Gastrocnemius medialis (tissue), 4 donors: ENCODE measurements at regions of chr13 and their contacts with region 1.

Region 1: GRCh38 chr13:20703780-20704445 is 414 bp downstream of the IL17D start:
- DNase-seq: peak in 1 of 2 donors; percentile 65
- ATAC-seq: peak; percentile 64 to 79
- H3K4me3 ChIP-seq: peak overlapping the region in 3 of 4 donors; percentile 23 to 71 (median 54)
- H3K27ac ChIP-seq: peak overlapping the region; percentile 22 to 77 (median 58)
- H3K4me1 ChIP-seq: peaks cover 12 to 14% of the 10 kb centered on the region in 2 donors
- H3K27me3 ChIP-seq: no peaks in the 10 kb centered on the region
- CTCF ChIP-seq: peak in 4 of 5 experiments; percentile 63 to 81 (median 78)
- POLR2A ChIP-seq: peak; percentile 44 to 68

Region 2: GRCh38 chr13:20495082-20496023 is 208.6 kb before region 1 on chr13:
- in situ Hi-C with region 1: loop called in 1 of 4 experiments (anchors 10 kb)
- intact Hi-C with region 1: loop called (anchors 5 kb)
- DNase-seq: peak; percentile 31 to 42
- ATAC-seq: peak; percentile 85 to 87
- H3K4me3 ChIP-seq: peak overlapping the region in 3 of 4 donors; percentile 14 to 31 (median 16)
- H3K27ac ChIP-seq: peak overlapping the region in 3 of 4 donors; percentile 25 to 47 (median 27)
- H3K4me1 ChIP-seq: no peaks in the 10 kb centered on the region
- H3K27me3 ChIP-seq: no peaks in the 10 kb centered on the region
- CTCF ChIP-seq: peak; percentile 83 to 95 (median 92)
- POLR2A ChIP-seq: no peak

Region 3: GRCh38 chr13:20518660-20519100 is 185.2 kb before region 1 on chr13:
- in situ Hi-C with region 1: no loop called
- intact Hi-C with region 1: loop called (anchors 5 kb)
- DNase-seq: no peak
- ATAC-seq: no peak
- H3K4me3 ChIP-seq: no peak overlapping the region
- H3K27ac ChIP-seq: no peak overlapping the region
- H3K4me1 ChIP-seq: no peaks in the 10 kb centered on the region
- H3K27me3 ChIP-seq: no peaks in the 10 kb centered on the region
- CTCF ChIP-seq: no peak
- POLR2A ChIP-seq: no peak

Region 4: GRCh38 chr13:20672772-20673171 is 31.1 kb before region 1 on chr13:
- in situ Hi-C with region 1: no loop called
- intact Hi-C with region 1: no loop called
- DNase-seq: no peak
- ATAC-seq: no peak
- H3K4me3 ChIP-seq: no peak overlapping the region
- H3K27ac ChIP-seq: no peak overlapping the region
- H3K4me1 ChIP-seq: no peaks in the 10 kb centered on the region
- H3K27me3 ChIP-seq: no peaks in the 10 kb centered on the region
- CTCF ChIP-seq: no peak
- POLR2A ChIP-seq: no peak

Region 5: DNA sequence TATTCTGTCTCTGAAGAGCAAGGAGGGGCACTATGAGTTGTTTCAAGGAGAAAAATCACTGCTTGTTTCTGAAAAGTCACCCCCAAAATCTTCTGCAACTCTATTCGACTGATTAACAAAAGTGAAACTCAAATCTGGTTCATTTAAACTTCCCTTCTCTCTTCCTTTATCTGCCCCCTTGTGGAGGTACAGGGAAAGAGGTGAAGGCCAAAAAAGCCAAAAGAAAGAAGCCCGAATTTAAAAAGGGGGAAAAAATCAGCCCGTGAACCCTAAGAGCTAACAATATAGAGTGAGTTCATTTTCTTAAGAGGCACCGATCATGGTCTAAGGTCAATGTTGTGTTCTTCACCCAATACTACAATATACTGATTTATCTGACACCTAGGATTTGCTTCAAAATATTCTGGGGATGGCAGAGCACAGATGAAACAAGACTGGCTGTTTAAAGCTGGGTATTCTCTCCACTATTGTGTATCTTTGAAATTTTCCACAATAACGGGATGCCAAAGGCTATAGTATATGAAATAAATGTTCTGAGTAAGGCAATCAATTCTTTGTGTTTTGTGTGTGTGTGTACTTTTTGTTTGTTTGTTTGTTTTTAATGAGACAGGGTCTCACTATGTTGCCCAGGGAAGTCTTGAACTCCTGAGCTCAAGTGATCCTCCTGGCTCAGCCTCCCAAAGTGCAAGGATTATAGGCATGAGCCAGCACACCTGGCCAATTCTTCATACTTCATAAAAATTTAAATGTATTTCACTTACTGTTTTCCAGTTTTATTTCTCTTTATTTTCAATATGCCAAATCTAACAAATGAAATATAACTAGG is 124.8 kb after region 1 on chr13:
- in situ Hi-C with region 1: loop called in 1 of 4 experiments (anchors 5 kb)
- intact Hi-C with region 1: no loop called
- DNase-seq: no peak
- ATAC-seq: peak; percentile 33 to 50
- H3K4me3 ChIP-seq: peak overlapping the region; percentile 35 to 63 (median 49)
- H3K27ac ChIP-seq: peak overlapping the region; percentile 87 to 93 (median 88)
- H3K4me1 ChIP-seq: peaks cover 73 to 79% of the 10 kb centered on the region in 2 donors
- H3K27me3 ChIP-seq: no peaks in the 10 kb centered on the region
- CTCF ChIP-seq: peak; percentile 78 to 85 (median 84)
- POLR2A ChIP-seq: no peak

Region 6: GRCh38 chr13:20924758-20925394 is 221.0 kb after region 1 on chr13:
- in situ Hi-C with region 1: loop called in 3 of 4 experiments (anchors 5 to 25 kb)
- intact Hi-C with region 1: loop called (anchors 2 kb)
- DNase-seq: peak; percentile 36 to 57
- ATAC-seq: peak in 1 of 2 donors; percentile 68
- H3K4me3 ChIP-seq: no peak overlapping the region
- H3K27ac ChIP-seq: no peak overlapping the region
- H3K4me1 ChIP-seq: no peaks in the 10 kb centered on the region
- H3K27me3 ChIP-seq: no peaks in the 10 kb centered on the region
- CTCF ChIP-seq: peak; percentile 43 to 84 (median 64)
- POLR2A ChIP-seq: no peak

Region 7: DNA sequence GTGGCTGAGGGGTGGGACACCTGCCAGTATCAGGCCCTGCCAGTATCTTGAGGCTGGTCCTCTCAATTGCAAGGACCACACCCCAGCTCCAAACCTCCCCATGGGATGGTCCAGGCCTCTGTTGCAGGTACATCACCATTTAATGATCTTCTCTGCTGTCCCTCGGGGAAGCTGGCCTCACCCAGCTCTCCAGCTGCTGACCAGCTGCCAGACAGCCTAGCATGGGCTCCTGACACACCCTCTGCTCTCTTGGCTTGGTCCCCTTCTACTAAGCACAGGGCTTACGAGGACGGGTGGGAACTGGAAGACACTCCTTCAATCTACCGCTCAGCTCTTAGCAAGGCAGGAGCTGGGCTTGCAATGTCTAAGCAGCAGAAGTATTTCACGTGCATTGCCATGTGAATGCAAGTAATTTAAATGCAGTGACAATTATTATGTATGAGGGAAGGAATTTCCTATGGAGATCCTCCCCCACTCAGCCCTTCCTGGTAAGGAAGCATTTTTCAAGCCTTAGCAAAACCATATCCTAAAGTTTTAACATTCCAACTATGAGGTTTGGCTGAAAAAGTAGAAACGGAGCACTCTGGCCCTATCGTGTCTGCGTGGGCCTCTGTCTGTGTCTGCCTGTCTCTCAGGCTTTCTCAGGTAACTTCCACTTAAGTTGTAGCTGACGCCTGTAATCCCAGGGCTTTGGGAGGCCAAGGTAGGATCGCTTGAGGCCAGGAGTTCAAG is 293.7 kb after region 1 on chr13:
- in situ Hi-C with region 1: no loop called
- intact Hi-C with region 1: loop called (anchors 5 kb)
- DNase-seq: peak in 1 of 2 donors; percentile 48
- ATAC-seq: no peak
- H3K4me3 ChIP-seq: no peak overlapping the region
- H3K27ac ChIP-seq: peak overlapping the region; percentile 77 to 90 (median 87)
- H3K4me1 ChIP-seq: peaks cover 41 to 50% of the 10 kb centered on the region in 2 donors
- H3K27me3 ChIP-seq: no peaks in the 10 kb centered on the region
- CTCF ChIP-seq: no peak
- POLR2A ChIP-seq: no peak

Region 8: DNA sequence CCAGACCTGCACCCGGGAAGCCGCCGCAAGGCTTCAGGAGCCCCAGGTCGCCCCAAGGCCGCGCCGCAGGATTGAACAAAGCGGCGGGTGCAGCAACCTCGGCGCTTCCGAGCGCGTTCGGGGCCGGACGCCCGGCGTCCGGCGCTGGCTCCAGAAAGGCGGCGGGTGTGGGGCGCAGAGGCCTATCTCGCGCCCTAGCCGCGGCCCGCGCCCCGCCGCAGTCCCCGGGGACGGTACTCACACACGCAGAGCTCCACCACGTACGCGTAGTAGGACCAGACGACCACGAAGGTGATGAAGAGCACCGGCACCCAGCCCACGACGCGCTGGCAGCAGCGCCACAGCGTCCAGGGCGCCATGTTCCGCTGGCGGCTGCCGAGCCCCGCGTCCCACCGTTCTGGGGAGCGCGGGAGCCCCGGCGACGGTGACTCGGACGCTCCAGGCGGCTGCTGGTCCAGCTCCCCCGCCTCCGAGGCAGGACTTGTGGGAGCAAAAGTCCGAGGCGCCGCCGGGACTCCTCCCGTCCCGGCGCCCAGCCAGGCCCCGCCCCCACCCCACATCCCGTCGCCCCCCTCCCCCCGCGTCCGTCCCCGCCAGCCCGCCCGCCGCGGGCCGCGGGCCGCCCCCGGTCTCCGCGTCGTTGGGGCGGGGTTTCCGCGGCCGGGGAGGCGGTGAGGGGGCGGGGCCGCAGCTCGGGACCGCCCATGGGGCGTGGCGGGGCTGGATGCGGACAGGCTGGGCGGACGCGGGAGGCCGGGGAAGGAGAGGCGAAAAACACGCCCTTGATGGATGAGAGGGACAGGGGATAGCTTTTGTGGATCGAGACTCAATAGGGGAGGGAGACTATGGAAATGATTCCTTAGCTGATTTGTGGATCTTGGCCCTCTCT is 755.1 kb after region 1 on chr13 and contains the start of gene ZDHHC20:
- in situ Hi-C with region 1: no loop called
- intact Hi-C with region 1: loop called (anchors 10 kb)
- DNase-seq: peak; percentile 72 to 81
- ATAC-seq: peak; percentile 90 to 92
- H3K4me3 ChIP-seq: peak within 1 kb of the TSS; percentile 88 to 99 (median 94)
- H3K27ac ChIP-seq: peak within 1 kb of the TSS; percentile 79 to 98 (median 89)
- H3K4me1 ChIP-seq: peaks cover 10 to 15% of the 10 kb centered on the region in 2 donors
- H3K27me3 ChIP-seq: no peaks in the 10 kb centered on the region
- CTCF ChIP-seq: no peak
- POLR2A ChIP-seq: peak; percentile 66 to 74
- total RNA-seq, gene ZDHHC20: 14.6 to 29.2 (median 23.1) TPM